ENCODE measurements at regions of chr1 and their contacts with region 1.

Region 1: GRCh38 chr1:241998412-241998921 is 431 bp downstream of the MAP1LC3C start:
- DNase-seq: no peak
- H3K4me3 ChIP-seq: peak overlapping the region; percentile 54
- CTCF ChIP-seq: peak; percentile 77

Region 2: GRCh38 chr1:241895013-241895412 is 103.5 kb before region 1 on chr1:
- CTCF ChIA-PET with region 1: interaction called, 73 read pairs
- POLR2A ChIA-PET with region 1: no interaction called
- DNase-seq: no peak
- H3K4me3 ChIP-seq: no peak overlapping the region
- CTCF ChIP-seq: no peak

Region 3: DNA sequence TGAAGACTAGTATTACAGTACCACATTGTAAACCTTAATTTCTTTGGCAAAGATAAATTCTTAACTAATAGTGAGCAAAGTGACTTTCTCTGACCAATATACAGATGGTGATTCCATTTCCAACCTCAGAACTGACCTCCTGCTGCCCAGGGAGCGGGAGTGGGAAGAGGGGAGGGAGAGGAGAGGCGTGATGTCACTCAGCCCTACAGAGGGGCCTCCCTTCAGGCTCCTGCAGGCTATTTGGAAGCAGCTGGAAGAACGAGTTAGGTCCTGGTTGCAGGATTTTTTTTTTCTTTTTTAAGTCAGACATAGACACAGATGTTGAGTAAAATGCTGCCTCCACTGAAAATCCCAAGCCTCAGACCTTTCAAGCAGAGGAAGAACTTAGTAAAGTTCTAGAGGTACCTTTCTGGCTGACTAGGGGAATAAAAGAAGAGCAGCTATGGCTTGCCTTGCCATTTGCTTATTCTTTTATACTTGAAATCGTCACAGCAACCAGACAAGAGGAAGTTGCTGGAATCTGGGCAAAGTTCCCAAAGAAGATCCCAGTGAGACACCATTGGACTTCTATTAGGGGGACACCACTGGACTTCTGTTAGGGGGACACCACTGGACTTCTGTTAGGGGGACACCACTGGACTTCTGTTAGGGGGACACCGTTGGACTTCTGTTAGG is 95.9 kb before region 1 on chr1:
- CTCF ChIA-PET with region 1: interaction called, 73 read pairs
- POLR2A ChIA-PET with region 1: no interaction called
- DNase-seq: no peak
- H3K4me3 ChIP-seq: no peak overlapping the region
- CTCF ChIP-seq: no peak

Region 4: DNA sequence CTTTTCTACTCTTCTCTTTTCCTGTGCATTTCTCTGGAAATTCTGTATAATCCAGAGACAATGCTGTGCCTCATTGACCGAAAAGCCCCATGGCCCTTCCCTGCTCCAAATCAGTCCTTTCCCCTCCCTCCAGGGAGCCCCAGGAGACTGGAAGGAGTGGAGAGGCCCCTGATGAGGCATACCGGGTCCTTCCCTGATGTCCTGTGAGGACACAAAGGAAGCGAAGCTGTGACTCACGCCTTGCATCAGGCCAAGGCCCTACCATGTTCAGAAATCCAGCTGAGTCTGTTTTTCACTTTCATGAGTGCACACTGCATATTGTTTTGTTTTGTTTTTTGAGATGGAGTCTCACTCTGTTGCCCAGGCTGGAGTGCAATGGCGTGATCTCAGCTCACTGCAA is 79.6 kb before region 1 on chr1:
- CTCF ChIA-PET with region 1: interaction called, 13 read pairs
- POLR2A ChIA-PET with region 1: no interaction called
- DNase-seq: peak; percentile 24
- H3K4me3 ChIP-seq: no peak overlapping the region
- CTCF ChIP-seq: no peak

Region 5: DNA sequence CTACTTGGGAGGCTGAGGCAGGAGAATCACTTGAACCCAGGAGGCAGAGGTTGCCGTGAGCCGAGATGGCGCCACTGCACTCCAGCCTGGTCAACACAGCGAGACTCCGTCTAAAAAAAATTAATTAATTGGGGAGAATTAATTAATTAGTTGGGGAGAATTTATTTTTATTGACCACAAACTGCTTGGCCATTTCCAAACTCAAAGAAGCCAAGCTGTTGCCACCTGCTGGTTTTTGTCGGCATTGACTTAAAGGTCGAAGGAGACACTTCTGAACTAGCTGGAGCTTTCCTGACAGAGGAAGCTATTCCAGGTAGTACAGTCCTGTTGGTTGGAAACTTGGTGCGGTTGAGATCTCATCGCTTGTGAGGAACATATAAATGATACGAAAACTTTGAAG is 12.7 kb before region 1 on chr1:
- CTCF ChIA-PET with region 1: interaction called, 29 read pairs
- POLR2A ChIA-PET with region 1: no interaction called
- DNase-seq: no peak
- H3K4me3 ChIP-seq: no peak overlapping the region
- CTCF ChIP-seq: peak; percentile 43

Region 6: DNA sequence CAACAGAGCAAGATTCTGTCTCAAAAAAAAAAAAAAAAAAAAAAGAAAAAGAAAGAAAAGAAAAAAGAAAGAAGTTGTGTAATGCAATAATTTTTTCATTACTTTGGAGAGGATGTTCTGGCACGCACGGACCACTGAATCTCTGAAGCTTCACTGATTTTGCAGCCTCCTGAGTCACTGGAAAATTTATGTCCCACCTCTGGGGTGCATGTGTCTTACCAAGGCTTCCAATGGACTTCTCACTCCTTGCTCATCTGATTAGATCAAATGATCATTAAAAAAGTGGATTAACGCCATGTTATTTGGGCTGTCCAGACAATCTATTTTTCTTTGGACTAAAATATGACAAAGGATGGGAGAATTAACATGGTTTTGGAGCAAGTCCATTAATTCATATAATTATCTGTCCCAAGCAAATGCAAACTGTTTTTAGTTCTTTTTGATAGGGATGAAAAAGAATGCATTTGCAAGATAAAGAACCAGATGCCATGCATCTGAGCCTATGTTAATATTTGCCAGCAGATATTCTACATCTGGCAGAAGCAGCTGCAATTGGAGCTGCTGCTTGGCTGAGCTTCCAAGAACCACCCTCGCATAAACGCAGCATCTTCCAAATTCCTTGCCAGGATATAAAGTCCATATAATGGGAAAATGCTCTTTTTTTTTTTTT is 10.5 kb after region 1 on chr1:
- CTCF ChIA-PET with region 1: interaction called, 18 read pairs
- POLR2A ChIA-PET with region 1: no interaction called
- DNase-seq: no peak
- H3K4me3 ChIP-seq: no peak overlapping the region
- CTCF ChIP-seq: no peak

Measured in AG04449 (cell line).